ENCODE measurements at regions of chr7 and their contacts with region 1.

Region 1: DNA sequence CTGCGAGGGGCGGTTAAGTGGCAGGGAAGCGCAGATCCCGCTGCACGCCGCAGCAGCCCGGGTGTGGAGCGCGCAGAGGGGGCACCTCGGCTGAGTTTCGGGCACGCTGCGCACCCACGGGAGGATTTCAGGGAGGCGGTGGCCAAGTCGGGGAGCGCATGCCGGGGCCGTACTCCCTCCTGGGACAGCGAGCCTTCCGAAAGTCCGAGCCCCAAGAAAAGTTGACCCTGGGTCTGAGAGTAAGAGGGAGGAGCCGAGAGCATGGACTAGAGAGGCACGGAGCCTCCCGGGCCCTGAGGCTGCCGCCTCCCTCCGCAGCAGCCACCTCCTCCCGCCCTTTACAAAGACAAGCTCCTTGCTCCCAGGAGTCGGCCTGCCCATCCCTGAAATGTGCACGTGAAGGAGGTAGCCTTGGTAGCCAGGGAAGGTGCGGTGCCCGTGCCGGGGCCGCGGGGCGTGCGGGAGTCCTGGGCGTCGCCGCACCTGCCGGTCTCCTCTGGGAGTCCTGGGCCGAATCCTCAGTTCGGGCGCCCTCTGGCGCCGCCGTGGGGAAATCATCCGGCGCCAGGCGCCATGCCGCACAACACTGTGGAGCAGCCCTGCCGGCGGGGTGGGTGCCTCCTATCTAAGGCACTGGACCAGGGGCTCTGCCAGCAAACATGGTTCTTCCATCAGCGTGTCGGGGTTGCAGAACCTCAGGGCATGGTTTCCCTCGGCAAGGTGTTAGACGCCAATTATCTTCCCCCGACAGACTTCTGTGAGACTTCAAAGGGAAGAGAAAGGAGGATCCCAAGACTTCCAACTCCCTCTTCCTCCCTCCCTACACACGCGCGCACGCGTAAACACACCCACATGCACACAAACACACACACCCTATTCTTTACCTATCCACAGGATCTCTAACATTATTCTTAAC is 104.0 kb downstream of the TRIL start:
- DNase-seq: peak; percentile 79
- ATAC-seq: peak; percentile 98
- H3K4me3 Mint-ChIP-seq: peak overlapping the region; percentile 83
- H3K27ac Mint-ChIP-seq: peak overlapping the region; percentile 24
- H3K4me1 Mint-ChIP-seq: peaks cover 11% of the 10 kb centered on the region
- H3K27me3 Mint-ChIP-seq: peaks cover 24% of the 10 kb centered on the region
- CTCF ChIP-seq: no peak

Region 2: DNA sequence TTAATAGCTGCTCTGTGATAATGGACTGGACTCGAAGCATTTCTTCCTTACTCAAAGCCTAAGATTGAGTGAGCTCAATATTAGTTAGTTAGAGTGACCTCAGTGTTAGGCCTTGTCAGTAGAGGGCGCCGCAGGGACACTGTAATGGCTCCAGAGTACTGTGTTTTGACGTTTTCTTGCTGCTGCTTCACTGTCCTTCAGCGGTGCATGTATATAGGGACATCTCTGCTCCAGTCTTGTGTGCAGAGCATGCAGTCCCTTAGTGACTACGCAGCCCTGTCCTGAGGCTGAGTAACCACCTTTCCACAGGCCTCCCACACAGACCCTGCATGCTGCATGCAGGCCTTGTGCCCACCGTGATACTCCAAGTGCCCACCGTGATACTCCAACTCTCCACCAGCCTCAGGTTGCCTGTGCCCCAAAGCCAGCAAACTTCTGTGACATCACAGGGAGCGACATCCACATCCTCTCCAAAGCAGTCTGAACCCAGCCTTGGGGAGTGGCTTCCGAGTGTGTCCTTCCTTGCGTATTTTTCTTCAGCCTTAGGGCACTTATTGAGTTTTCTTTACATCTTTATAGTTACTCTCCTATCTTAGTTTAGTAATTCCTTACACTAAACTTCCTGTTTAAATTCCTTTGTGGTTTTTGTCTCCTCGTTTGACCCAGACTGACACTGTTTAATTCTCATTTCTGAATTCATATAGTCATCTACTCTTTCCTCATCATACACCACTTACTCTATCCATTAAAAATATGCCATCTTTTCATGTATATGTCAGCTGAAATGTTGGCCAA is 791.7 kb before region 1 on chr7:
- CTCF ChIA-PET with region 1: no interaction called
- POLR2A ChIA-PET with region 1: no interaction called
- intact Hi-C with region 1: loop called (anchors 1 kb)
- DNase-seq: peak; percentile 33
- ATAC-seq: peak; percentile 64
- H3K4me3 Mint-ChIP-seq: no peak overlapping the region
- H3K27ac Mint-ChIP-seq: no peak overlapping the region
- H3K4me1 Mint-ChIP-seq: peaks cover 34% of the 10 kb centered on the region
- H3K27me3 Mint-ChIP-seq: no peaks in the 10 kb centered on the region
- CTCF ChIP-seq: peak; percentile 40

Region 3: DNA sequence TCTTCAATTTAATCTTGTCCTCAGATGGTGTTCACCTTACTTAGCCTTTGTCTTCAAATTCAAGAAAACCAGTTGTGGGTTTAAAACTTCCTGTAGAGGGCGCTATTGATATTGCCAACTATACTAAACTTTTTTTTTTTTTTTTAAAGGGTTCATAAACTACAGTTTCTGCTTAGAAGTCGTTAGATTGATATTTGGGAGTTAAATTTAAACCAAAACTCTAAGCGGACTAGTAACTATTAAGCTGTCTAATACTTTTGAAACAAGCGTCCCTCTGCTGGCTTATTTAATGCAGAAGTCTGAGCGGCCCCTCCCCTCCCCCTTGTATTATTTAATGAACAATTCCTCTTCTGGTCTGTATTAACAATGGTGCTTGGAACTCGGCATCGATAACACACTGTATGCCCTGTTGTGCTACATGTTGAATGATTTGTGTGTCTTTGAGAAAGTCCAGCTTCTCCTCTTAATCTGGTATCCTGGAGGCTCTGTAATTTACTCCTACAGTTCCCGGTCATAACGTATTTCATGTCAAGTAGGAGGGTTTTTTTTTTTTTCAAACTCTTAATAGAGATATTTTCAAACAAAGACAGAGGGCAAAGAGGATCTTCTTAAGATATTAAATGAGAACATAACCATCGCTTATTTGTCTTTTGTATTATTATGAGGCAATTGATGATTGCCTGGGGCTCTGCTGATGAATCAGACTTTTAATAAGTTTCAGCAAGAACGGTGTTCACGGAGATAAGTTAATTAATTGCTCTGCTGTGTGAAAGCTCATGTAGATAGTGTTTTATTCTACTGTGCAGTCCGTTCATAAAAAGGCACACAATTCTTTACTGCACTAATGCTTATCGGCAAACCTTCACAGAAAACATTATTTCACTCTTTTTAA is 464.3 kb before region 1 on chr7:
- CTCF ChIA-PET with region 1: interaction called, 11 read pairs
- POLR2A ChIA-PET with region 1: no interaction called
- intact Hi-C with region 1: loop called (anchors 1 kb)
- DNase-seq: no peak
- ATAC-seq: peak; percentile 25
- H3K4me3 Mint-ChIP-seq: no peak overlapping the region
- H3K27ac Mint-ChIP-seq: no peak overlapping the region
- H3K4me1 Mint-ChIP-seq: peaks cover 3% of the 10 kb centered on the region
- H3K27me3 Mint-ChIP-seq: peaks cover 17% of the 10 kb centered on the region
- CTCF ChIP-seq: peak; percentile 44

Region 4: DNA sequence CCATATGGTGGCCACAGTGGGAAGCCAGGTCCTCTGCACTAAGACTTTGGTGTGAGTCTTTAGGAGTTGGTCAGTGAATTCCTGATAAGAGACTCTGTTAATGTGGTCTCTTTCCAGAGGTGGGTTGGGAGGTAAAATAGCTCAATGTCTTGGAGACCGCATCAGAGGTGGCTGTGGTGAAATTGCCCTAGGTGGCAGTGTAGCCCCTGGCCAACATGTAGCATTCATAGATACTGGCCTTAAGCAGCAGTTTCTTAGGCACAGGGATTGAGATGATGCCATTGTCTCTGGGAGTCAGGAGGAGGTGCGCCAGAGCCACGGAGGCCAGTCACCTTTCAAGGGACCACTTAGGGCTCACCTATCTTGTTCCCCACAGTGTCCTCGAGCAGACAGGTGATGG is 239.0 kb before region 1 on chr7:
- CTCF ChIA-PET with region 1: interaction called, 16 read pairs
- POLR2A ChIA-PET with region 1: no interaction called
- intact Hi-C with region 1: loop called (anchors 1 kb)
- DNase-seq: no peak
- ATAC-seq: no peak
- H3K4me3 Mint-ChIP-seq: no peak overlapping the region
- H3K27ac Mint-ChIP-seq: no peak overlapping the region
- H3K4me1 Mint-ChIP-seq: no peaks in the 10 kb centered on the region
- H3K27me3 Mint-ChIP-seq: no peaks in the 10 kb centered on the region
- CTCF ChIP-seq: no peak

Region 5: GRCh38 chr7:28685644-28686417 is 168.3 kb before region 1 on chr7:
- CTCF ChIA-PET with region 1: no interaction called
- POLR2A ChIA-PET with region 1: no interaction called
- intact Hi-C with region 1: loop called (anchors 1 kb)
- DNase-seq: peak; percentile 25
- ATAC-seq: peak; percentile 57
- H3K4me3 Mint-ChIP-seq: no peak overlapping the region
- H3K27ac Mint-ChIP-seq: no peak overlapping the region
- H3K4me1 Mint-ChIP-seq: peaks cover 4% of the 10 kb centered on the region
- H3K27me3 Mint-ChIP-seq: no peaks in the 10 kb centered on the region
- CTCF ChIP-seq: no peak

Region 6: GRCh38 chr7:28787106-28787505 is 67.0 kb before region 1 on chr7:
- CTCF ChIA-PET with region 1: no interaction called
- POLR2A ChIA-PET with region 1: no interaction called
- intact Hi-C with region 1: loop called (anchors 2 kb)
- DNase-seq: no peak
- ATAC-seq: peak; percentile 61
- H3K4me3 Mint-ChIP-seq: no peak overlapping the region
- H3K27ac Mint-ChIP-seq: no peak overlapping the region
- H3K4me1 Mint-ChIP-seq: peaks cover 37% of the 10 kb centered on the region
- H3K27me3 Mint-ChIP-seq: no peaks in the 10 kb centered on the region
- CTCF ChIP-seq: no peak

Region 7: DNA sequence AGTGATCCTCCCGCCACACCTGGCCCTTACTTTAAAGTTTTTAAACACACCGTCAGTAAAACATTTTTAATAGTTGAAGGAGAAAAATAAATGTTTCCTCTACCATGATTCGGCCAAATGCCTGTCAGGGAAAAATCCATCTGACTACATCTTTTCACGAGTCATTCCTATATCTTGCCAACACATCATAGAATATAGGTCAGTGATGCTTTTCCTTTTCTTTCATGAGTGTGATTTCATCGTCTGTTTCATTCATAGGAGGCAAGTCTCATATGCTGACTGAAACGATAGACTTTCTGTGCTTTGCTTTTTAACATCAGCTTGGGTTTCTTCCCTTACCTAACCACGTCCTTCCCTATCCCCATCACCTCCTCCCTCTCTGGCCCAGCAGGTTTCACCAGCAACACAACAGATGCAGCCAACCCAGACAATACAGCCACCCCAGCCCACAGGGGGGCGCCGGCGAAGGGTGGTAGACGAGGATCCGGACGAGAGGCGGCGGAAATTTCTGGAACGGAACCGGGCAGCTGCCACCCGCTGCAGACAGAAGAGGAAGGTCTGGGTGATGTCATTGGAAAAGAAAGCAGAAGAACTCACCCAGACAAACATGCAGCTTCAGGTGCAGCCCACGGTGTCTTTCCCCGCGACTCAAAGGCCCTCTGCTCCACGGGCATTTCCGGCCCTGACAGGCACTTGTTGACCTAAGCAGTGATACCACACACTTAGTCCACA is 45.1 kb before region 1 on chr7:
- CTCF ChIA-PET with region 1: interaction called, 3 read pairs
- POLR2A ChIA-PET with region 1: no interaction called
- intact Hi-C with region 1: loop called (anchors 1 kb)
- DNase-seq: peak; percentile 28
- ATAC-seq: peak; percentile 73
- H3K4me3 Mint-ChIP-seq: peak overlapping the region; percentile 60
- H3K27ac Mint-ChIP-seq: no peak overlapping the region
- H3K4me1 Mint-ChIP-seq: peaks cover 19% of the 10 kb centered on the region
- H3K27me3 Mint-ChIP-seq: no peaks in the 10 kb centered on the region
- CTCF ChIP-seq: no peak

Region 8: GRCh38 chr7:30284298-30285066 is 1430.4 kb after region 1 on chr7 and contains the start of gene ZNRF2:
- CTCF ChIA-PET with region 1: no interaction called
- POLR2A ChIA-PET with region 1: no interaction called
- intact Hi-C with region 1: no loop called
- DNase-seq: peak; percentile 95
- ATAC-seq: peak; percentile 82
- H3K4me3 Mint-ChIP-seq: peak within 1 kb of the TSS; percentile 87
- H3K27ac Mint-ChIP-seq: peak within 1 kb of the TSS; percentile 90
- H3K4me1 Mint-ChIP-seq: peaks cover 48% of the 10 kb centered on the region
- H3K27me3 Mint-ChIP-seq: no peaks in the 10 kb centered on the region
- CTCF ChIP-seq: no peak
- total RNA-seq, gene ZNRF2: 18.7 and 21.4 TPM in 2 replicates

Measured in activated B cell treated with CpG ODN at 0.5 μM for 24 hours (primary cell).